Activated CD4-positive, alpha-beta memory T cell treated with anti-CD3 and anti-CD28 coated beads for 36 hours (primary cell): ENCODE measurements at regions of chr1 and their contacts with region 1.

Region 1: GRCh38 chr1:110196917-110197765 is 13.0 kb upstream of the KCNC4 start:
- DNase-seq: peak; percentile 63
- H3K4me3 Mint-ChIP-seq: no peak overlapping the region
- H3K27ac Mint-ChIP-seq: no peak overlapping the region
- H3K4me1 Mint-ChIP-seq: no peaks in the 10 kb centered on the region
- H3K27me3 Mint-ChIP-seq: no peaks in the 10 kb centered on the region

Region 2: GRCh38 chr1:110298991-110299390 is 101.8 kb after region 1 on chr1:
- CTCF ChIA-PET with region 1: interaction called, 920 read pairs
- POLR2A ChIA-PET with region 1: no interaction called
- intact Hi-C with region 1: no loop called
- DNase-seq: no peak
- H3K4me3 Mint-ChIP-seq: no peak overlapping the region
- H3K27ac Mint-ChIP-seq: no peak overlapping the region
- H3K4me1 Mint-ChIP-seq: no peaks in the 10 kb centered on the region
- H3K27me3 Mint-ChIP-seq: no peaks in the 10 kb centered on the region

Region 3: GRCh38 chr1:110319332-110320152 is 122.4 kb after region 1 on chr1:
- CTCF ChIA-PET with region 1: interaction called, 920 read pairs
- POLR2A ChIA-PET with region 1: no interaction called
- intact Hi-C with region 1: no loop called
- DNase-seq: no peak
- H3K4me3 Mint-ChIP-seq: no peak overlapping the region
- H3K27ac Mint-ChIP-seq: no peak overlapping the region
- H3K4me1 Mint-ChIP-seq: no peaks in the 10 kb centered on the region
- H3K27me3 Mint-ChIP-seq: no peaks in the 10 kb centered on the region